ENCODE measurements at regions of chr12 and their contacts with region 1.

Region 1: DNA sequence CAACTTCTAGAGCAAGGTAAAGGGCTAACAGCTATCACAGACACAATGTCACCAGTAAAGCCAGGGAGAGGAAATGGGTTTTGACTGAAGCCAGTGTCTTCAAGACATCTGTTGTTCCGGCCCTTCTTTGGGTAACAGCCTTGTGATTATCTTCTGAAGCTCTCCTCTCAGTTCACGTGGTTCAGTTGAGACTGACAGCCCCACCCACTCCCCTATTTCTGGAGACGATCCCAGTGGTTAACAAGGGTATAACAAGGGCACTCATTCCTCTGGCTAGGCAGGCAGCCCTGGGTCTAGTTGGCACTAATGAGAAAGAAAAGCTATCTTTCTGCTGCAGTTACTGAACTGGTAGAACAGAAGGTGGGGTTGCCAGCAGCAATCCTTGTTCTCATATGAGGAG is 6.9 kb downstream of the GNPTAB start:
- DNase-seq: peak; percentile 82
- ATAC-seq: peak; percentile 92
- H3K4me3 Mint-ChIP-seq: peak overlapping the region; percentile 49
- H3K27ac Mint-ChIP-seq: peak overlapping the region; percentile 80
- H3K4me1 Mint-ChIP-seq: peaks cover 79% of the 10 kb centered on the region
- H3K27me3 Mint-ChIP-seq: no peaks in the 10 kb centered on the region
- CTCF ChIP-seq: peak; percentile 60

Region 2: GRCh38 chr12:101782273-101782731 is 41.6 kb before region 1 on chr12:
- CTCF ChIA-PET with region 1: interaction called, 104 read pairs
- POLR2A ChIA-PET with region 1: interaction called, 5 read pairs
- intact Hi-C with region 1: no loop called
- DNase-seq: peak; percentile 55
- ATAC-seq: peak; percentile 77
- H3K4me3 Mint-ChIP-seq: peak overlapping the region; percentile 1
- H3K27ac Mint-ChIP-seq: peak overlapping the region; percentile 90
- H3K4me1 Mint-ChIP-seq: peaks cover 25% of the 10 kb centered on the region
- H3K27me3 Mint-ChIP-seq: no peaks in the 10 kb centered on the region
- CTCF ChIP-seq: no peak

Region 3: GRCh38 chr12:101792051-101792931 is 31.6 kb before region 1 on chr12:
- CTCF ChIA-PET with region 1: interaction called, 141 read pairs
- POLR2A ChIA-PET with region 1: interaction called, 8 read pairs
- intact Hi-C with region 1: loop called (anchors 2 kb)
- DNase-seq: no peak
- ATAC-seq: no peak
- H3K4me3 Mint-ChIP-seq: no peak overlapping the region
- H3K27ac Mint-ChIP-seq: peak overlapping the region; percentile 83
- H3K4me1 Mint-ChIP-seq: peaks cover 45% of the 10 kb centered on the region
- H3K27me3 Mint-ChIP-seq: no peaks in the 10 kb centered on the region
- CTCF ChIP-seq: no peak